Endothelial cell of umbilical vein (primary cell): ENCODE measurements at regions of chrX and their contacts with region 1.

Region 1: GRCh38 chrX:130575831-130576389 is 174.1 kb downstream of the RBMX2 start:
- DNase-seq: peak; percentile 35
- H3K4me3 ChIP-seq: no peak overlapping the region
- H3K27ac ChIP-seq: no peak overlapping the region
- H3K4me1 ChIP-seq: no peaks in the 10 kb centered on the region
- H3K27me3 ChIP-seq: no peaks in the 10 kb centered on the region
- CTCF ChIP-seq: peak; percentile 36 to 76
- POLR2A ChIP-seq: no peak

Region 2: GRCh38 chrX:130531066-130531465 is 44.8 kb before region 1 on chrX:
- CTCF ChIA-PET with region 1: no interaction called
- POLR2A ChIA-PET with region 1: no interaction called
- dilution Hi-C with region 1: no loop called
- intact Hi-C with region 1: no loop called
- DNase-seq: no peak
- H3K4me3 ChIP-seq: no peak overlapping the region
- H3K27ac ChIP-seq: no peak overlapping the region
- H3K4me1 ChIP-seq: no peaks in the 10 kb centered on the region
- H3K27me3 ChIP-seq: no peaks in the 10 kb centered on the region
- CTCF ChIP-seq: no peak
- POLR2A ChIP-seq: no peak

Region 3: GRCh38 chrX:130606425-130606824 is 30.5 kb after region 1 on chrX:
- CTCF ChIA-PET with region 1: interaction called, 10 read pairs
- POLR2A ChIA-PET with region 1: no interaction called
- dilution Hi-C with region 1: no loop called
- intact Hi-C with region 1: no loop called
- DNase-seq: no peak
- H3K4me3 ChIP-seq: no peak overlapping the region
- H3K27ac ChIP-seq: no peak overlapping the region
- H3K4me1 ChIP-seq: no peaks in the 10 kb centered on the region
- H3K27me3 ChIP-seq: no peaks in the 10 kb centered on the region
- CTCF ChIP-seq: no peak
- POLR2A ChIP-seq: no peak

Region 4: DNA sequence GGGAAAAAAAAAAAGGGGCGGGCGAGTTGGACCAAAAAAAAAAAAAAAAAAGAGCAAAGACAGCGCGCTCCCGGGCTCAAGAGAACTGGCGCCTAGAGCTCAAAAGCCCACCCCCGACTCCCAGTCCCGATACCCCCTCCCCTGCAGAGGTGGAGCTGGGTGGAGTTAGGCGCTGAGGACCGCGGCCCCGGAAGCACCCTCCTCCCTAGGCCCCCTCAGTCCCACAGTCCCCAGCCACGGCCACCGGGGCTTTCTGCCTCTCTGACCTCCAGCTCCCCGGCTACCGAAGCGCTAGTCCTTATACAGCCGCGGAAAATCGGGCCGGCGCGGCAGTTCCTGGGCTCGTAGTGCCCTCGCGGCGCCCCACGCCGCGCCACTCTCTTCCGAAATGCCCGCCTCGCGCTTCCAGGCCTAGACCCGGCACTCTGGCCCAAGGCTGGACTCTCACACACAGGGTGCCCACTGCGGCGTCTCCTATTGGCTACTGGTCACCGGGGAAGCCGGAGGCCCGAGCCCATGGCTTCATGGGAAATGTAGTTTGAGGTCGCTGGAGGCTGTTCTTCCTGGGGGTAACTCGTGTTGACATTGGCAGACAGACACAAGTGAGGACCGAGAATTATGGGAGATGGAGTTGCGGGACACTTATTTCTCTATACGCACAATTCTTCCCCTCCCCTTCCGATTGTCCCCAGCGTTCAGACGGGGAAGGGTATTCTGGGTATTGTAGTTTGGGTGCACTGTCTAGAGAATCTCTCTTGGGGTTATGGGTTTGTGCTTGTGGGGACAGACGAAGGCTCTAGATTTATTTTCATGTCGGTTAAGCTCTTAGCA is 327.1 kb after region 1 on chrX and contains the start of gene ENOX2:
- CTCF ChIA-PET with region 1: interaction called, 11 read pairs
- POLR2A ChIA-PET with region 1: no interaction called
- dilution Hi-C with region 1: no loop called
- intact Hi-C with region 1: no loop called
- DNase-seq: peak; percentile 95
- H3K4me3 ChIP-seq: peak within 1 kb of the TSS; percentile 47 to 87 (median 68)
- H3K27ac ChIP-seq: peak within 1 kb of the TSS; percentile 46
- H3K4me1 ChIP-seq: peaks cover 2% of the 10 kb centered on the region
- H3K27me3 ChIP-seq: peaks cover 0 to 4% of the 10 kb centered on the region in 2 experiments
- CTCF ChIP-seq: no peak
- POLR2A ChIP-seq: peak; percentile 73
- total RNA-seq, gene ENOX2: 12.2 and 13.1 TPM in 2 replicates